Sciatic nerve (tissue), 2 donors: ENCODE measurements at regions of chr5 and their contacts with region 1.

Region 1: DNA sequence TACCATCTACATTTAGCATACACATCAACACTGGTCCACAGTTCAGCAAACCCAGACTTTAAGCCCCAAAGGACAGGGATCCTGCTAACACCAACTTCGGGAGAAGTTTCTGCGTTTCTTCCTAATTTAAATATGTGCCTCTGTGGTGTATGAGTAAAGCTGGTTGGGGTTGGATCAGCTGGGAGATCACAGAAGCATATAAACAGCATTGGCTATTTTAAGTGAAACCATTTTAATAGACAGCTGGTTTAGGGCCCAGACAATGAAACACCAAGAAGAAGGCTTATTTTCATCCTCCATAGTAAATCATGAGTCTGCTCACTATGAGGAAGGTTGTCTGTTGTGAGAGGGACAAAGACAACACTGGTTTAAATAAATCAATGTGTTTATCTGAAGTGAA is 11.3 kb downstream of the EBF1 start:
- DNase-seq: no peak
- ATAC-seq: no peak

Region 2: GRCh38 chr5:158792976-158793375 is 295.4 kb before region 1 on chr5:
- intact Hi-C with region 1: loop called (anchors 5 kb)
- DNase-seq: no peak
- ATAC-seq: no peak